A673 (cell line): ENCODE measurements at regions of chr6 and their contacts with region 1.

Region 1: GRCh38 chr6:3848925-3849605 is at the start of gene FAM50B:
- DNase-seq: peak; percentile 91
- H3K4me3 ChIP-seq: peak within 1 kb of the TSS; percentile 68
- H3K27ac ChIP-seq: peak within 1 kb of the TSS; percentile 75
- H3K4me1 ChIP-seq: no peaks in the 10 kb centered on the region
- H3K27me3 ChIP-seq: no peaks in the 10 kb centered on the region
- CTCF ChIP-seq: peak; percentile 92
- total RNA-seq, gene FAM50B: 10.1 and 13.0 TPM in 2 replicates

Region 2: GRCh38 chr6:2988426-2989331 is 860.4 kb before region 1 on chr6:
- CTCF ChIA-PET with region 1: no interaction called
- POLR2A ChIA-PET with region 1: no interaction called
- intact Hi-C with region 1: no loop called
- DNase-seq: peak; percentile 93
- H3K4me3 ChIP-seq: peak overlapping the region; percentile 56
- H3K27ac ChIP-seq: peak overlapping the region; percentile 97
- H3K4me1 ChIP-seq: peaks cover 12% of the 10 kb centered on the region
- H3K27me3 ChIP-seq: no peaks in the 10 kb centered on the region
- CTCF ChIP-seq: peak; percentile 60

Region 3: GRCh38 chr6:3751730-3752542 is 97.1 kb before region 1 on chr6:
- CTCF ChIA-PET with region 1: interaction called, 7 read pairs
- POLR2A ChIA-PET with region 1: no interaction called
- intact Hi-C with region 1: loop called (anchors 5 kb)
- DNase-seq: peak; percentile 88
- H3K4me3 ChIP-seq: peak overlapping the region; percentile 58
- H3K27ac ChIP-seq: peak overlapping the region; percentile 71
- H3K4me1 ChIP-seq: peaks cover 30% of the 10 kb centered on the region
- H3K27me3 ChIP-seq: no peaks in the 10 kb centered on the region
- CTCF ChIP-seq: peak; percentile 40

Region 4: DNA sequence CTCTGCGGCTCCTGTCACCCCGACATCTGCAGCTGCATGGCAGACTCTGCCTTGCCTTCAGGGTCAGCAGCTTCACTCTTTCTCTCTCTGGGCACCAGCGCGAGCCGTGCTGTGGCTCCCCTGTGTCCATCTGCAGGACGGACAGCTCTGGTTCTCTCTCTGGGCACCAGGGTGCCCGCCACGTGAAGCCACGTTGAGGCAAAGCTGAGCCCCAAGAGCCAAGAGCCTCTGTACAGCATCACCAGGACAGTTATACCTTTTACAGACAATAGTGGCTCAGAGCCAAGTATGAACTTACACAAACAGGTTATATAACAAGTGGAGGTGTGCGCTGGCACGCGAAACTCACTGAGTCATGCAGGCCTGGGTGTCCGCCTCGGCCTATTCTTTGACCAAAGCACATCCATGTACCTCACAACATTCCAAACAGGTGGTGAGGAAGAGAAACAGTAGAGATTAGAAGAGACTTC is 50.9 kb after region 1 on chr6:
- CTCF ChIA-PET with region 1: no interaction called
- POLR2A ChIA-PET with region 1: no interaction called
- intact Hi-C with region 1: no loop called
- DNase-seq: no peak
- H3K4me3 ChIP-seq: no peak overlapping the region
- H3K27ac ChIP-seq: no peak overlapping the region
- H3K4me1 ChIP-seq: no peaks in the 10 kb centered on the region
- H3K27me3 ChIP-seq: no peaks in the 10 kb centered on the region
- CTCF ChIP-seq: no peak

Region 5: GRCh38 chr6:3990692-3991501 is 141.8 kb after region 1 on chr6:
- CTCF ChIA-PET with region 1: interaction called, 12 read pairs
- POLR2A ChIA-PET with region 1: no interaction called
- intact Hi-C with region 1: no loop called
- DNase-seq: peak; percentile 94
- H3K4me3 ChIP-seq: no peak overlapping the region
- H3K27ac ChIP-seq: peak overlapping the region; percentile 59
- H3K4me1 ChIP-seq: peaks cover 3% of the 10 kb centered on the region
- H3K27me3 ChIP-seq: no peaks in the 10 kb centered on the region
- CTCF ChIP-seq: peak; percentile 95

Region 6: GRCh38 chr6:4225161-4225872 is 376.3 kb after region 1 on chr6:
- CTCF ChIA-PET with region 1: no interaction called
- POLR2A ChIA-PET with region 1: no interaction called
- intact Hi-C with region 1: no loop called
- DNase-seq: no peak
- H3K4me3 ChIP-seq: no peak overlapping the region
- H3K27ac ChIP-seq: no peak overlapping the region
- H3K4me1 ChIP-seq: no peaks in the 10 kb centered on the region
- H3K27me3 ChIP-seq: no peaks in the 10 kb centered on the region
- CTCF ChIP-seq: no peak